ENCODE measurements at regions of chr14 and their contacts with region 1.

Region 1: DNA sequence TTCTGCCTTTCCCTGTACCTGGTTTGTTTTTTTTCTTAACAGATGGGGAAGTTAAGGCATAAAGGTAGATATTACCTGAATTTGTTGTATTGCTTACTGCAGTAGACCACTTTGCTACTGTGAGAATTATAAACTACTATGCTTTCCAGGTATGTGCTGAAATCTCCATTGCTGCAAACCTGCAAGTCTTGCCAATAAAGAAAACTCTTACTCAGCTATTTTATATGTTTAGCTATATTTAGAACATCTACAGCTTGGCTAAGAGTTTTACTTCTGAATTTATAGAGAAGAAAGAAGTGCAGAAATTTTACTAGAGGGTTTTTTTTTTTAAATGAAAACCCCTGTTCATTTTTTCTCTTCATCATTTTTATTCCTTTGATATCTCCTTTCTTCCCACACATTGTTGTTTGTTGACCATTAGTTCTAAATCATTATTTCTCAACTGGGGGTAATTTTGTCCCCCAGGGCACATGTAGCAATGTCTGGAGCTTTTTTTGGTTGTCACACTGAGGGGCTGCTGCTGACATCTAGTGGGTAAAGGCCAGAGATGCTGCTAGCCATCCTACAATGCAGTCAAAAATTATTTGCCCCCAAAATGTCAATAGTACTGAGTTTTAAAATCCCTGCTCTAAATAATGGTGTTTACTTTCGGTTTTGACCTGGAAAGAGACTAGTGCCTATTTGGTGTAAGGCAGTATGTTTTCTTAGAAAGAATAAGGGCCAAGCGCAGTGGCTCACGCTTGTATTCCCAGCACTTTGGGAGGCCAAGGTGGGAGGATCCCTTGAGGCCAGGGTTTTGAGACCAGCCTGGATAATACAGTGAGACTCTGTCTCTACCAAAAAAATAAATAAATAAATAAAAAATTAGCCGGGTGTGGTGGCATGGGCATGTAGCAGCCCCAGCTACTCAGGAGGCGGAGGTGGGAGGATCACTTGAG is 48.6 kb downstream of the PCNX1 start:
- DNase-seq: peak; percentile 64
- ATAC-seq: peak; percentile 75
- H3K4me3 Mint-ChIP-seq: no peak overlapping the region
- H3K27ac Mint-ChIP-seq: no peak overlapping the region
- H3K4me1 Mint-ChIP-seq: peaks cover 23% of the 10 kb centered on the region
- H3K27me3 Mint-ChIP-seq: no peaks in the 10 kb centered on the region

Region 2: GRCh38 chr14:70809543-70810244 is 146.1 kb before region 1 on chr14:
- CTCF ChIA-PET with region 1: interaction called, 19 read pairs
- POLR2A ChIA-PET with region 1: interaction called, 8 read pairs
- DNase-seq: peak; percentile 97
- ATAC-seq: peak; percentile 90
- H3K4me3 Mint-ChIP-seq: no peak overlapping the region
- H3K27ac Mint-ChIP-seq: no peak overlapping the region
- H3K4me1 Mint-ChIP-seq: peaks cover 15% of the 10 kb centered on the region
- H3K27me3 Mint-ChIP-seq: peaks cover 2% of the 10 kb centered on the region

Region 3: GRCh38 chr14:70887207-70887681 is 68.6 kb before region 1 on chr14:
- CTCF ChIA-PET with region 1: interaction called, 53 read pairs
- POLR2A ChIA-PET with region 1: no interaction called
- DNase-seq: no peak
- ATAC-seq: peak; percentile 28
- H3K4me3 Mint-ChIP-seq: peak overlapping the region; percentile 64
- H3K27ac Mint-ChIP-seq: peak overlapping the region; percentile 92
- H3K4me1 Mint-ChIP-seq: peaks cover 97% of the 10 kb centered on the region
- H3K27me3 Mint-ChIP-seq: no peaks in the 10 kb centered on the region

Region 4: GRCh38 chr14:70934502-70935134 is 21.2 kb before region 1 on chr14:
- CTCF ChIA-PET with region 1: interaction called, 18 read pairs
- POLR2A ChIA-PET with region 1: no interaction called
- DNase-seq: no peak
- ATAC-seq: peak; percentile 85
- H3K4me3 Mint-ChIP-seq: peak overlapping the region; percentile 47
- H3K27ac Mint-ChIP-seq: peak overlapping the region; percentile 77
- H3K4me1 Mint-ChIP-seq: peaks cover 54% of the 10 kb centered on the region
- H3K27me3 Mint-ChIP-seq: no peaks in the 10 kb centered on the region

Region 5: GRCh38 chr14:70972107-70972976 is 16.5 kb after region 1 on chr14:
- CTCF ChIA-PET with region 1: interaction called, 14 read pairs
- POLR2A ChIA-PET with region 1: no interaction called
- DNase-seq: peak; percentile 90
- ATAC-seq: peak; percentile 81
- H3K4me3 Mint-ChIP-seq: no peak overlapping the region
- H3K27ac Mint-ChIP-seq: peak overlapping the region; percentile 54
- H3K4me1 Mint-ChIP-seq: peaks cover 23% of the 10 kb centered on the region
- H3K27me3 Mint-ChIP-seq: no peaks in the 10 kb centered on the region

Measured in activated CD8-positive, alpha-beta T cell treated with anti-CD3 and anti-CD28 coated beads, Interleukin-2, amount 10 ng/mL, durations not matched to agents 7 days and 5 days (primary cell).